Prostate gland (tissue), 2 donors: ENCODE measurements at regions of chr9 and their contacts with region 1.

Region 1: GRCh38 chr9:136790927-136791641 is at the start of gene TMEM141:
- DNase-seq: peak; percentile 100
- H3K4me3 ChIP-seq: peak within 1 kb of the TSS; percentile 65
- H3K27ac ChIP-seq: peak within 1 kb of the TSS; percentile 99
- H3K4me1 ChIP-seq: peaks cover 9% of the 10 kb centered on the region
- H3K27me3 ChIP-seq: no peaks in the 10 kb centered on the region
- CTCF ChIP-seq: no peak
- POLR2A ChIP-seq: peak; percentile 94
- total RNA-seq, gene TMEM141: 181 to 335 TPM

Region 2: DNA sequence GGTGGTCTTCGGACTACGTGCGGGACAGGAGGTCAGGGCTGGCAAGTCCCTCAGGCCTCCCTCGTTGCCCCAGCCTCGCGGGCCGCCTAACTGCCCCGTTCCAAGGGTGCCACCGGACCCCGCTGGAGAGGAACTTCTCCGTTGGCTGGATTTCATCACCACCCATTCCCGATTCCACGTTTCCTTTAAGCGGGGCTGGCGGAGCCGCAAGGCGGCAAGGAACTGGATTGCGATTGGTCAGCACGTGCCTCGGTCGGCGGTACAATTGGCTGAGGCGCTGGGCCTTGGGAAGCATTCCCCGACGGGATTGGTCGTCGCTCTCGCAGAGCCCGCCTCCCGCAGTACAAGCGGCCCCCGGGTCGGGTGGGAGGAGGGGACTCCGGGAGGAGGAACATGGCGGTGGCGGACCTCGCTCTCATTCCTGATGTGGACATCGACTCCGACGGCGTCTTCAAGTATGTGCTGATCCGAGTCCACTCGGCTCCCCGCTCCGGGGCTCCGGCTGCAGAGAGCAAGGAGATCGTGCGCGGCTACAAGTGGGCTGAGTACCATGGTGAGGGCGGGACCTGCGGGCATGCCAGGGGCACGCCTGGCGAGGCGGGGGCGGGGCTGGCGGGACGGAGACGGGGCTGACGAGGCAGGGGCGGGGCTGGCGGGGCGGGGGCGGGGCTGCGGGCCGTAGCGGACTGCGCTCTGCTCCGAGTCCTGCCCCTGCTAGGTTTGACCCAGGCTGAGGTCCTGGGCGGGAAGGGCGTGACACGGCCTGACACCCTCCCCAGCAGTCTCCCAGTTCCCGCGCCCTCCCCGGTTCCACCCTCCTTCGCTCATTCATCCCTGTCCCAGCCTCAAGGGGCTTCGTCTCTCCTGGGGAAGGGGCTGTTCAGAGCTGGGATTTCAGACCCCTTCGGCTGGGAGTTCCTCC is 58.2 kb after region 1 on chr9 and contains the start of gene PHPT1:
- intact Hi-C with region 1: loop called (anchors 5 kb)
- DNase-seq: peak; percentile 99
- H3K4me3 ChIP-seq: peak within 1 kb of the TSS; percentile 50 to 56
- H3K27ac ChIP-seq: peak within 1 kb of the TSS; percentile 84 to 91
- H3K4me1 ChIP-seq: peaks cover under 1% of the 10 kb centered on the region
- H3K27me3 ChIP-seq: no peaks in the 10 kb centered on the region
- CTCF ChIP-seq: peak in 2 of 4 experiments; percentile 12 to 23
- POLR2A ChIP-seq: peak; percentile 61
- total RNA-seq, gene PHPT1: 139 to 212 TPM

Region 3: DNA sequence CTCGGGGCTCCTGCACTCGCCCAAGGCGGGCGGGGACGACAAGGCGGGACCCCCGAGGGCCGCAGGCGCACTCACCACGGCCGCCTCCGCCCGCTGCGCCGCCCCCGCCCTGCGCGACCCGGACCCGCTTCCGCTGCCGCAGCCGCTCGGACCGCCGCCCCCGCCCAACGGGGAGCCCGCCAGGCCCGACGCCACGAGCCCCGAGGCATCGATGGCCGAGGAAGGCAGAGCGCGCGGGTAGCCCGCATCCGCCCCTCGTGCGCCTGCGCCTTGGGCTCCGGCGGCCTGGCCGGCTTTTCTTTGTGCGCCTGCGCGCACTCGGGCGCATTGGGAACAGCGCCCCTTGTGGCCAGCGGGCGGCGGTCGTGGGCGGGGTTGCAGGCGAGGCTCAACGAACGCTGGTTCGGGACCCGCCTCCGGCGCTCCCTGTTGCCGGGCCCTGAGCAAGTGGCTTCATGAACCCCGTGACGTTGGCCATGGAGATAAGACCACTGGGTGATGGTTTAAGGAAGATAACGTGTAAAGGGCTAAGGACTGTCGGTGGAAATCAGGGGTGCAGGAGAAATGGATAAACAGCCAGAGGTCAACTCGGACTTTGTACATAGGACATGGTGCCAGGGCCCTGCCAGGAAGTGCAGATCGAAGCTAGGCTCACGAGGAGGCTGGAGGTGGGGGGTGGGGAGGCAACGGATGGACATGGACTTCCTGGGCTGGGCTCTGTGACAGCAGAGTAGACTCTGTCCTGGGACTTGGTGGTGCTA is 153.6 kb after region 1 on chr9 and contains the starts of genes C8G and FBXW5:
- intact Hi-C with region 1: loop called (anchors 5 kb)
- DNase-seq: peak; percentile 91
- H3K4me3 ChIP-seq: peak within 1 kb of the TSS; percentile 75 to 81
- H3K27ac ChIP-seq: peak within 1 kb of the TSS; percentile 71 to 91
- H3K4me1 ChIP-seq: no peaks in the 10 kb centered on the region
- H3K27me3 ChIP-seq: no peaks in the 10 kb centered on the region
- CTCF ChIP-seq: peak; percentile 97 to 100 (median 100)
- POLR2A ChIP-seq: peak; percentile 48
- total RNA-seq, gene C8G: not detected
- total RNA-seq, gene FBXW5: 199 to 304 TPM

Region 4: DNA sequence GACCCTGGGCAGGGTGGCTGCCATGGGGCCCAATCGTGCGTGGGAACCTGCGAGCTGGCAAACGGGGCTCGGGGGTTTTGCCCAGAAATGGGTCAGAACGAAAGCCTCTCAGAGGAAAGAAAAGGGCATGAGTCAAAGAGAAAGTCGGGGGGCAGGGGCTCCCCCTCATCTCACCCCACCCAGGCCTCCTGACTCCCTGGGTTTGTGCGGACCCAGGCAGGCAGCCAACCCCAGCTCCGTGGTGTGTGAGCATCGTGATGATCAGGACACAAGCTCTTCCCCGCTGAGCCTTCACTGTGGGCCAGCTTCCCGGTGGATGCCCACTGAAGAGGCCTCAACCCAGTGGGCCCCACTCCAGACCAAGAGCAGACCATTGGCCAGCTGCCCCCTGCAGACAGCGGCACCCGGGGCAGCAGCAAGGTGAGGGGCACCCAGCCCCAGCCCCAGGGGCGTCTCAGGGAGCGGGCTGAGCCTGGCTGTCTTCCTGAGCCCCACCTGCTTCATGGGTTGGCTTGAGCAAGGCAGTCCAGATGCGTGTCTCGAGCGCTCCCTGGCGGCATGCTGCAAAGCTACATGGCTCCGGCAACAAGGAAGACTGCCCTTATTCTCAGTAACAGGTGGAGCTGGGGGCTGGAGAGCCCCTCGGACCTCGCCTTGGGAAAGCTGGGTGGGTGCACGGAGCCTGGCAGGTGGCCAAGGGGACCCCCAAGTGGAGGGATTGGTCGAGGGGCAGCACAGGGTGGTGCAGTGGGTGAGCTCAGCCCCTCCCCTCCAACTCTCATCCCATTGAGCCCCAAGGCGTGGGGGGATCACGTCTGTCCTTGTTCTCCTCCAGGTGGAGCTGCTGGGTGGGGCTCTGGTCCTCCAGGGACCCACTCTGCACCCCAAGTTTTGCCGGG is 244.0 kb after region 1 on chr9:
- intact Hi-C with region 1: loop called (anchors 5 kb)
- DNase-seq: peak; percentile 68
- H3K4me3 ChIP-seq: no peak overlapping the region
- H3K27ac ChIP-seq: peak overlapping the region in 1 of 2 donors; percentile 45
- H3K4me1 ChIP-seq: peaks cover 8% of the 10 kb centered on the region
- H3K27me3 ChIP-seq: no peaks in the 10 kb centered on the region
- CTCF ChIP-seq: peak; percentile 74 to 94 (median 90)
- POLR2A ChIP-seq: no peak

Region 5: GRCh38 chr9:137067860-137068538 is 276.9 kb after region 1 on chr9:
- intact Hi-C with region 1: loop called (anchors 10 kb)
- DNase-seq: peak; percentile 78
- H3K4me3 ChIP-seq: no peak overlapping the region
- H3K27ac ChIP-seq: peak overlapping the region in 1 of 2 donors; percentile 34
- H3K4me1 ChIP-seq: peaks cover 3% of the 10 kb centered on the region
- H3K27me3 ChIP-seq: no peaks in the 10 kb centered on the region
- CTCF ChIP-seq: peak; percentile 48 to 94 (median 84)
- POLR2A ChIP-seq: no peak